ENCODE measurements at regions of chr17 and their contacts with region 1.

Region 1: DNA sequence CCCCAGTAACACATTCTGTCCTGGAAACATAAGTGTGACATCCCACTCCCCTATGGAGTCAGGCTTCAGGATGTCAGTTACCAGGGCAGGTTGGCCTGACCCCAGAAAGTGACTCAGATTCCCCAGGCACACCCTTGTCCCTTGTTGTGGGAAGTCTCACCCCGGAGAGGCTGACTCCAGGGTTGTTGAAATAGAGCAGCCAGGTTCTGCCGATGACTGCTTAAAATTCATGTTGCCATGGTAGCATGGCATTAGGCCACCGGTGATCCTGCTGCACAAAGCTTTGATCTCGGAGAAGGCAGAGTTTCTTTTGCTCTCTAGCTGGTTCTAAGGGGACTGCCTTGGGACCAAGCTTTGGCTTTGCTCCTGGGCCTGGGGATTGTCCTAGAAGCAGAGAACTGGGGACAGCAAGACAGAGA is 106.6 kb downstream of the RGS9 start:
- DNase-seq: peak; percentile 33
- H3K4me3 ChIP-seq: no peak overlapping the region
- H3K27ac ChIP-seq: no peak overlapping the region
- H3K4me1 ChIP-seq: no peaks in the 10 kb centered on the region
- H3K27me3 ChIP-seq: peaks cover 2% of the 10 kb centered on the region
- CTCF ChIP-seq: no peak

Region 2: GRCh38 chr17:65307081-65307960 is 63.5 kb after region 1 on chr17:
- CTCF ChIA-PET with region 1: no interaction called
- dilution Hi-C with region 1: loop called (anchors 5 kb)
- in situ Hi-C with region 1: no loop called
- intact Hi-C with region 1: no loop called
- DNase-seq: no peak
- H3K4me3 ChIP-seq: no peak overlapping the region
- H3K27ac ChIP-seq: no peak overlapping the region
- H3K4me1 ChIP-seq: no peaks in the 10 kb centered on the region
- H3K27me3 ChIP-seq: no peaks in the 10 kb centered on the region
- CTCF ChIP-seq: no peak